ENCODE measurements at regions of chr7 and their contacts with region 1.

Region 1: DNA sequence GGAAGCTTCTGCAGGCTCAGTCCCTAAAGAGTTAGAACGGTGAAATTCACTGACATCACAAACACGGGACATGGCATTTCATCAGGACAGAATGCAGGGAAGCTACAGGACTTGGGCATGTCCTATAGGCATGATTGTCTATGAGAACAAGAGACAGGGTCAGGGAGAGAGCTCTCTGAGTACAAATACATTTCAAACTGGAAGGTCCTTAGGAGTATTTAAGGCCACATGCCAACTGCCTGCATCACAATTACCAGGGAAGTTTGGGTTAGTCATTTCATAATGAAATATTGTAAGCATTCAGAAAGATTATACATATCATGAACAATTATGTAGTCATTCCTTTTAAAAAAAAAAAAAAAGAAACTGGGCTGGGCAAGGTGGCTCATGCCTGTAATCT is 71.3 kb downstream of the CREB3L2 start:
- DNase-seq: peak; percentile 88
- ATAC-seq: peak; percentile 83
- H3K4me3 ChIP-seq: no peak overlapping the region
- H3K27ac ChIP-seq: peak overlapping the region; percentile 84
- H3K4me1 ChIP-seq: peaks cover 26% of the 10 kb centered on the region
- H3K27me3 ChIP-seq: no peaks in the 10 kb centered on the region
- CTCF ChIP-seq: no peak

Region 2: GRCh38 chr7:137944168-137944567 is 13.6 kb after region 1 on chr7:
- CTCF ChIA-PET with region 1: no interaction called
- POLR2A ChIA-PET with region 1: no interaction called
- intact Hi-C with region 1: loop called (anchors 2 kb)
- DNase-seq: peak; percentile 23
- ATAC-seq: peak; percentile 17
- H3K4me3 ChIP-seq: no peak overlapping the region
- H3K27ac ChIP-seq: no peak overlapping the region
- H3K4me1 ChIP-seq: peaks cover 21% of the 10 kb centered on the region
- H3K27me3 ChIP-seq: no peaks in the 10 kb centered on the region
- CTCF ChIP-seq: no peak

Region 3: DNA sequence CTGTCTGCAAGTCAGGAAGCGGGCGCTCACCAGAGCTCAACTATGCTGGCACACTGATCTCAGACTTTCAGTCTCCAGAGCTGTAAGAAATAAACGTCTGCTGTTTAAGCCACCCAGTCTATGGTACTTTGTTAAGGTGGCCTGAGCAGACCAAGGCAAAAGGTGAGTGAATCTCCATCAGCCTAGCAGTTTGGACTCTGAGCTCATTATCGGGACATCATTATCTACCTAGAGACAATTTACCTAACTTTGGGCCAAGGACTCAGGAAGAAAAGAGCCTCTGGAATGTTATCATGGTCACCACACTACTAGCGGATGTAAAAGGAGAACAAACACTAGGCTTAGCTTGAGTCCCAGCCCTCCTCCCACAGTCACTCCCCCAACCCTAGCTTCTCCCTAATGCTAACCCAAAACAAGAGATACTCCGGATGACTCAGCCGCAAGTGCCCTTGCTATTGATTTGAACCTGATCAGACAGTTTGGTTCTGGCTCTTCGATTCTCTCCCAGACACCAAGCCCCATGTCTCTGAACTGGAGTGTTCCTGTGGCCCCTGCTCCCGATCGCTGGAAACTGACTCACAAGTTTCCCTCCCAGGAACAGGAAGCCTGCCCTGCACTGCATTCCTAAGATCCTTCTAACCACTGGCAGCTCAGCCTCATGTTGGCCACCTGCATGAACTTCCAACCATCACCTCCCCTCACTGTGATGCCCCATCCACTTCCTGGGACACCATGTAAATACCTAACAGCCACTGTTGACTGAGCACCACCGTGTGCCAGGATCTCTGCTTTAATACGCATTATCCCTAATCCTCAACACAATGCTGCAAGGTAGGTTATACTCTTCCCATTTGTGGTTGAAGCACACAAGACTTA is 36.8 kb after region 1 on chr7:
- CTCF ChIA-PET with region 1: no interaction called
- POLR2A ChIA-PET with region 1: no interaction called
- intact Hi-C with region 1: no loop called
- DNase-seq: peak; percentile 40
- ATAC-seq: peak; percentile 33; the same call in 1 of the 2 replicates
- H3K4me3 ChIP-seq: no peak overlapping the region
- H3K27ac ChIP-seq: no peak overlapping the region
- H3K4me1 ChIP-seq: peaks cover 33% of the 10 kb centered on the region
- H3K27me3 ChIP-seq: no peaks in the 10 kb centered on the region
- CTCF ChIP-seq: no peak

Region 4: GRCh38 chr7:137978464-137979237 is 48.1 kb after region 1 on chr7:
- CTCF ChIA-PET with region 1: no interaction called
- POLR2A ChIA-PET with region 1: no interaction called
- intact Hi-C with region 1: loop called (anchors 1 kb)
- DNase-seq: peak; percentile 92
- ATAC-seq: peak; percentile 82
- H3K4me3 ChIP-seq: no peak overlapping the region
- H3K27ac ChIP-seq: peak overlapping the region; percentile 94
- H3K4me1 ChIP-seq: peaks cover 48% of the 10 kb centered on the region
- H3K27me3 ChIP-seq: no peaks in the 10 kb centered on the region
- CTCF ChIP-seq: no peak

Measured in PC-3 (cell line).